ENCODE measurements at regions of chr4 and their contacts with region 1.

Region 1: DNA sequence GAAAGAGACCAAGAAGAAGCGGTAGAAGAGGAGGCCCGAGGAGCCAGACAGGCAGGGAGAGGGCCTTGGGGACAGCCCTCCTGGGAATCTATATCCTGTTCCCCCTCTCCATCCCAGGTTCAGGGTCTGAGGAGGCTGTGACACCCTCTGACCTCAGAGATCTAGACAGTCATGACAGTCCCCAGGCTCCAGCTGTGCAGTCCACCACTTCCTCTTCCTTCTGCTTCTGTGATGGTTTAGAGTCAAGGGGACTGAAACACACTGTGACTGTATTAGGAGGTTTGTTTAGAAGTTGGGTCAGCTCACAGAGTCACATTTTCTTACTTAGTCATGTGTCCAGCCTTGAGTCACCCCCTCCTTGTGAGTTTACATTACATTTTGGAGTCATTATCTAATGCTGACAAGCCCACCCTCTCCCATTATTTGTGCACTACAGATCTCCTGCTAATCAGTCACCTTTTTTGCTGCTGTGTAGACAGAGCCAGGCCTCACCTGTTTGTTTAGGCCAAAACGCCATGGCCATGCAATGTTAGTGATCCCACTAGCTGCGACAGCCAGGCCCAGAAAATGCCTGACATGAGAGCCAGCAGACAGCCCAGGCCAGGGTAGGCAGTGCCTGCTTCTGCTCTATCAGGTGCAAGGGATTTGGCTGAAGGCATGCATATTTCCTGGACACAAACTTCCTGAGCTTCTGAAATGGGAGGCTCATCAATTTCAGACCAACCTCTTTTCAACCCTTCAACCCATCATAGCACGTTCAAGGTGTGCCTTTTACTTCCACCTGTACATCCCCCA is 26.0 kb downstream of the MANBA start:
- DNase-seq: no peak
- H3K4me3 Mint-ChIP-seq: no peak overlapping the region
- H3K27ac Mint-ChIP-seq: peak overlapping the region; percentile 39
- H3K4me1 Mint-ChIP-seq: peaks cover 29% of the 10 kb centered on the region
- H3K27me3 Mint-ChIP-seq: no peaks in the 10 kb centered on the region
- CTCF ChIP-seq: no peak

Region 2: GRCh38 chr4:102692474-102692873 is 42.3 kb before region 1 on chr4:
- CTCF ChIA-PET with region 1: interaction called, 4 read pairs
- intact Hi-C with region 1: loop called (anchors 1 kb)
- DNase-seq: no peak
- H3K4me3 Mint-ChIP-seq: no peak overlapping the region
- H3K27ac Mint-ChIP-seq: no peak overlapping the region
- H3K4me1 Mint-ChIP-seq: no peaks in the 10 kb centered on the region
- H3K27me3 Mint-ChIP-seq: no peaks in the 10 kb centered on the region
- CTCF ChIP-seq: no peak

Region 3: GRCh38 chr4:103365285-103365684 is 630.5 kb after region 1 on chr4:
- CTCF ChIA-PET with region 1: no interaction called
- intact Hi-C with region 1: no loop called
- DNase-seq: no peak
- H3K4me3 Mint-ChIP-seq: no peak overlapping the region
- H3K27ac Mint-ChIP-seq: no peak overlapping the region
- H3K4me1 Mint-ChIP-seq: peaks cover 10% of the 10 kb centered on the region
- H3K27me3 Mint-ChIP-seq: no peaks in the 10 kb centered on the region
- CTCF ChIP-seq: no peak